Left cardiac atrium (tissue), 4 donors: ENCODE measurements at regions of chr6 and their contacts with region 1.

Region 1: DNA sequence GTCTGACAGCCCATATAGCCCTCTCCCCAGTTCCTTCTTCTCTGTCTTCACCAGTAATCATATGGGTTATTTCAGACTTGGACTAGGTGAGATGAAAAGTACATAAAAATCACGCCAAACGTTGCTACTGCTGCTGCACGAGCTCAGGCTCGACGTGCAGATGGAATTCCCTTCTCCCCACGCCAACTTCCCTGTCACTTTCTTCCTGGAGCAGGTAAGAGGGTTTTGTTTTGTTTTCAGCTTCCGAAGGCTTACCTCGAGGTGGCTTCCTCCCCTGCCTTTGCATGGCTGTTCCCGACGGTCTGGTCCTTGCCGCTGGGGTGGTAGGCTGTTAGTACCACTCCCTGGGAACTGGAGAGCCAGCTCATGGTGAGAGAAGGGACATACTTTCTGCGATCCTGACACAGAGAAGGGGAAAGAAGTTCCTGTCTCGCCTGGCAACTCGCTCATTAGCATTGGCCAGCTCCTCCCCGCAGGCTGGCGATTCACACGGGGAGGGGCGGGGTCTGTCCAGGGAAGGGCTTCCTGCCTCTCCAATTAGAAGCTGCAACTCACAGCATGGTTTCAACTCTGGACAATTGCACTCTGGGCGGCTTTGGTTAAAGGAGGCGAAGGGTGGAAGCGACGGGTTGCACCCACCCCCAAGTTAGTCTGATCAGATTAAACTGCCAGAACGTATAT is at the start of gene ARHGAP18:
- DNase-seq: peak; percentile 91
- ATAC-seq: peak; percentile 97 to 98
- total RNA-seq, gene ARHGAP18: 12.1 to 12.4 TPM

Region 2: DNA sequence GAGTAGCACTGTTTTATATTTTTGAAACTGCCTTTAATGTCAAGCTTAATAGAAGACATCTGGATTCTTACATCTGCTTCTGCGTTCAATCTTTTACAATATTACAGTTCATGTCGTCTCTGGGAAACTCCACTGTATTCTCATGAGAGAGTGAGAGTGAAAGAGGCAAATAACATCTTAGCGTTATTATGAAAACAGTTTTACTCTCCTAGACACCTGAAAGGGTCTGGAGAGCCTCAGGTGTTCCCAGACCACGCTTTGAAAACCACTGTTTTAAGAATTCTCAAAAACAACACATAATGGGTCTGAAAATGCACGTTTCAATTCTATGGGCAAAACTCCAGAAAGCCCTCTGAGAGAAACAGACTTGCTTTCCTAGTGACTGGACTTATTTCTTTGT is 63.3 kb before region 1 on chr6:
- intact Hi-C with region 1: no loop called
- DNase-seq: no peak
- ATAC-seq: no peak

Region 3: GRCh38 chr6:129661536-129662405 is 48.1 kb before region 1 on chr6:
- intact Hi-C with region 1: loop called in 1 of 2 experiments (anchors 5 kb)
- DNase-seq: no peak
- ATAC-seq: peak in 1 of 2 donors; percentile 36

Region 4: DNA sequence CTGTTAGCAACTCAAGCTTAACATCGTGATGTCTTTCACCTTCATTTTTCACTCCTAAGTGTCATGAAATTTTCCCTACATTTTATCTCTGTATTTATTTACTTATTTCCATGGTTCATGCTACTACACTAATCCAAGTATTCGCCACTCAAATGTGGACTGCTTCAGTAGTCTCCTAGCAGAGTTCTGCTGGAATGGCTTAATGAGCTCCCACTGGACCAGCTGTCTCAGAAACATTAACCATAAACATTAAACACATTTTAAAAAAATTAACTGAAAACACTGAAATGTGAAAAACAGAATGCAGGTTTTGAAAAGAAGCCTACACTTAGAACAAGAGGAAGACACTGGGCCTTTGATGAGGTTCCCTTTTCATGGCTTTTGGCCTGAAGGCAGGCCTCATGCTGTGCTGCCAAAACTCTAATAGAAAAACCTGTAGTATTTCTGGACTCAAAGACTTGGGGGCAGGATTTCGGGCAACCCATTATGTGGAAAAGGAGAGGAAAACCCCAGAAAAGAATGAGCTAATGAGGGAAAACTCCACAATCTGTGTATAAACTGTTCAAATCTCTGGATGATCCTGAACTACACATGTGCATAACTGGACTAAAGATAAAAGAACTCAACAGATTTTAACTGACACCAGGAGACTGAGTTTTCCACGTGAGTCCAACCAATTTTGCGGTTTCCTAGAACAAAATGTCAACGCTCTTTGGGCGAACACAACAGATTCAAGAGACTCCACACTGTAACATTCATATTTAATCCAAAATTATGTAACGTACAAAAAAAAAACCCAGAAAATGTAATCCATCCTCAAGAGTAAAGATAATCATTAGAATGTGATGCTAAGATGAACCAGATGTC is 479.9 kb after region 1 on chr6:
- intact Hi-C with region 1: no loop called
- DNase-seq: no peak
- ATAC-seq: no peak